ENCODE measurements at regions of chr17 and their contacts with region 1.

Region 1: GRCh38 chr17:78865682-78866390 is 25.2 kb upstream of the USP36 start:
- DNase-seq: peak; percentile 50 to 95 (median 87)

Region 2: GRCh38 chr17:78923660-78924453 is 58.0 kb after region 1 on chr17:
- intact Hi-C with region 1: loop called (anchors 5 kb)
- DNase-seq: peak in 14 of 42 donors; percentile 15 to 63 (median 39)

Region 3: DNA sequence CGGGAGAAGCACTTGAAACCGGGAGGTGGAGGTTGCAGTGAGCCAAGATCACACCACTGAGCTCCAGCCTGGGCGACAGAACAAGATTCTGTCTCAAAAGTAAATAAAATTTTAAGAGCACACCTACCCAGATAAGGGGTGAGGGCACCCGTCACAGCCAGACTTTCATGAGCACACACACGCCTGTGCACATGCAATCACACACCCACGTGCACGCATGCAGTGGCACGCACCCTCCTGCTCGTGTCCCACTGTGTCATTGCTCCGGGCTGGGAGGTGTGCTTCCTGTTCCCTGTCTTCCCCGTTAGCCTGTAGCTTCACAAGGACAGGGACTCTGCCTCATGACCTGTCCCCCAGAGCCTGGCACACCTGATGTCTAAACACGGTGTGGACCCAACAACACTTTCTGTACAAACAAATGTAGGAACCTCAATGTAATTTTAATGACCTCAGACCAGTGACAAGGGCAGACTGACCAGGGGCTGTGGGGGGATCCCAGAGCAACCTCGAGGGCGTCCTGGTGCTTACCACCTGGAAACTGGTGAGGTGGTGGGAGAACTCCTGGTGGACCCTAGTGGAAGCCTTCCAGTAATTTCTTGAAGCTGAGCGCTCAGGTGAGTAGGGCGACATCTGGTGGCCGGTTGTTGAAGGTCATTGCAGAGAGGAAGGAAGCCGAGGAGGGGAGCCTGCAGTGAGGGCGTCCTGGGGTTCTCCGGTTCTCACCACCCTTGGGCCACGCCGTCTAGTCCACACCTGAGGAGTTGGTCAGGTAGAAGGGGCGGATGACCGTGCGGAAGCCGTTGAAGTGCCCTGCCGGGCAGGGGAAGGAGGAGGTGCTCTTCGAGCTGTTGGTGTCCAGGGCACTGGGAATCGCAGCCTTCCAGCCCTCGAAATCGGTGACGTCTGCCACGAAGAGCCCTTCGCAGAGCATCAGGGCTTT is 105.3 kb after region 1 on chr17:
- intact Hi-C with region 1: loop called (anchors 2 kb)
- DNase-seq: peak; percentile 70 to 95 (median 86)